Common myeloid progenitor, CD34-positive (primary cell): ENCODE measurements at regions of chr3 and their contacts with region 1.

Region 1: GRCh38 chr3:46866720-46867549 is 3.7 kb upstream of the MYL3 start:
- DNase-seq: peak in 2 of 3 donors; percentile 55 to 67
- H3K4me3 ChIP-seq: no peak overlapping the region
- H3K27ac ChIP-seq: no peak overlapping the region
- H3K4me1 ChIP-seq: peaks cover 0 to under 1% (median 0%) of the 10 kb centered on the region in 4 experiments
- H3K27me3 ChIP-seq: no peaks in the 10 kb centered on the region

Region 2: DNA sequence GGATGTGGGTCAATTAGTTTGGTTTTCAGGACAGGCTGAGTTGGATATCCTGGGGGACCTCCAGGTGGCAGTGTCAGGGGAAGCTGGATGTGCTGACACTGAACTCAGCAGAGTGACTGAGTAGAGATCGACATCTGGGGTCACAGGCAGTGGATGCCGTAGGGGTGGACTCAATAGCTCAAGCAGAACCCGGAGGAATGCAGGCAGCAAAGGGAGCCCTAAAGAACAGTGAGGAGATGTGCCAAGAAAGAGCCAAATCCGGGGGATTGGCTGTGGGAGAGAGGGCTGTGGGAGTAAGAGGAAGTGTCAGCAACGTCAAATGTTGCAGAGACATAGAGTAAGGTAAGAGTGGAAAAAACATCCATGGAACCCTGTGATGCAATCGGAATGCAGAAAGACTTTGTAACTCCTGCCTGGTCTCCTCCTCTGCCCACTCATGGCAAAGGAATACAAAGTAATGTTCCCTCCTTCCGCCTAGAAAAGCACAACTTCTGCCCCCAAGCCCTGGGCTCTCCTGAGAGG is 471.7 kb before region 1 on chr3:
- CTCF ChIA-PET with region 1: no interaction called
- POLR2A ChIA-PET with region 1: no interaction called
- DNase-seq: no peak
- H3K4me3 ChIP-seq: no peak overlapping the region
- H3K27ac ChIP-seq: no peak overlapping the region
- H3K4me1 ChIP-seq: peaks cover 4 to 37% (median 11%) of the 10 kb centered on the region in 4 experiments
- H3K27me3 ChIP-seq: no peaks in the 10 kb centered on the region

Region 3: DNA sequence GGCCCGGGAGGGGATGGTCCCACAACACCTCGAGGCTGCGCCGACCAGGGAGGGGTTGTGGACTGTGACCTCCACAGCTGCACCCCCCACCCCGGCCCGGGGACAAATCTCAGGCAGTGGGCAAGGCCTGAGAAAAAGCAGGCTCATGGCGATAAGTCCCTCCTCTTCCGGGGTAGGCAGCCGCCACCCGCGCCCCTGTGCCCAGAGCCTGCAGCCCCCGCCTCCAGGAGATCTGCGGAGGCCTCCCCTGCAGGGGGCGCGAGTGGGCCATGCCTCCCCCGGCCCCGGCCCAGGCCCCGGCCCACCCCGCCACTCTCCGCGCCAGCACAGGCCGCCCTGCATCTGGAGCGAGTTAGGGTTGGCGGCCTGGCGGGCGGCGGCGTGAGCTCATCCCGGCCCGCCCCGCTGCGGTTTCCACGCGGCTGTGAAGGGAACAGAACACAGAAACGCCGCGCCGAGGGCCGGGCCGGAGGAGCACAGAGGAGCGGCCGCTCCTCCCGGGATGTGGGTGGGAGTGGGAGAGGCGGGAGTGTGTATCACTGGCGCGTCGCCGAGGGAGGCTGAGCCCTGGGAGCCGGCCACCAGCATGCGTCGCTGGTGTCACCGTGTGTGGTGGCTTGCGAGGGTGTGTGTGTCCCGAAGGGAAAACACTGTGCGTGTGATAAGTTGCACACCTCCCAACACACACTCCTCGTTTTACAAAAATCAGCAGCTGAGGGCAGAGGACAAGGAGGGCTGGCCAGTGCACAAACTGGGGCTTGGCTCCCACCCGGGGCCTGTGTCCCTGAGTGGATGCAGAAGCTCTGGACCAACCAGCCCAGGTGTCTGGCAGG is 20.9 kb before region 1 on chr3:
- CTCF ChIA-PET with region 1: interaction called, 18 read pairs
- POLR2A ChIA-PET with region 1: no interaction called
- DNase-seq: peak; percentile 87 to 94 (median 92)
- H3K4me3 ChIP-seq: peak overlapping the region; percentile 33 to 86 (median 69)
- H3K27ac ChIP-seq: no peak overlapping the region
- H3K4me1 ChIP-seq: peaks cover 0 to 18% (median 16%) of the 10 kb centered on the region in 4 experiments
- H3K27me3 ChIP-seq: peaks cover 0 to 2% (median 0%) of the 10 kb centered on the region in 5 experiments

Region 4: DNA sequence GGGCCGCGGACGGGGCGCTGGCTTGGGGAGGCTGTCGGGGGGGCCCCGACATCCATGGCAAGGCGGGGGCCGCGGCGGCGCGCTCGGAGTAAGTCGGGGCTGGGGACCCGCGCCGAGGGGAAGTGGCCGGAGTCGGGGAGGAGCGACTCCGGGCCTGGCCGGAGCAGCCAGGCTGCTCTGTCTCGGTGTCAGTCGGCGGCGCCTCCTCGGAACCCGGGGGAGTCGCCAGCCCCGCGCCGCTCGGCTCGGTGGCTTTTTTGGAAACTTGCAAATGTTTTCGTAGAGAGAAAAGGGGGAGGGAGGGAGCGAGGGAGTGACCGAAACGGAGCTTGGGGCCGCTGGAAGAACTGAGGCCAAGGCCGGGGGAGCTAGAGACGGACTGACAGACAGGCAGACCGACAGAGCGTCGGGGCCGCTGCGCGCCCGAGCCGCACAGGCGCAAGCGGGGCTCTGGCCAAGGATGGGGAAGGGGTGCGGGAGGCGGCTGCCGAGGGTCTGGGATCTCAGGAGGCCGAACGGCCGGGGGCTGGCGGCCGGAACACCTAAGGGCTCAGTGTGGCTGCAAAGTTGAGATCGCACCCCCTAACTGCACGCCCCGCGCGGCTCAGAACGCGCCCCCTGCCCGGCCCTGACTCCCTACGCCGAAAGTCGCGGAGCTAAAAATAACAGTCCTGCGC is 15.6 kb after region 1 on chr3:
- CTCF ChIA-PET with region 1: interaction called, 10 read pairs
- POLR2A ChIA-PET with region 1: interaction called, 4 read pairs
- DNase-seq: peak in 2 of 3 donors; percentile 25 to 36
- H3K4me3 ChIP-seq: peak overlapping the region; percentile 23 to 66 (median 47)
- H3K27ac ChIP-seq: no peak overlapping the region
- H3K4me1 ChIP-seq: peaks cover 0 to 20% (median 15%) of the 10 kb centered on the region in 4 experiments
- H3K27me3 ChIP-seq: peaks cover 0 to 48% (median 16%) of the 10 kb centered on the region in 5 experiments

Region 5: DNA sequence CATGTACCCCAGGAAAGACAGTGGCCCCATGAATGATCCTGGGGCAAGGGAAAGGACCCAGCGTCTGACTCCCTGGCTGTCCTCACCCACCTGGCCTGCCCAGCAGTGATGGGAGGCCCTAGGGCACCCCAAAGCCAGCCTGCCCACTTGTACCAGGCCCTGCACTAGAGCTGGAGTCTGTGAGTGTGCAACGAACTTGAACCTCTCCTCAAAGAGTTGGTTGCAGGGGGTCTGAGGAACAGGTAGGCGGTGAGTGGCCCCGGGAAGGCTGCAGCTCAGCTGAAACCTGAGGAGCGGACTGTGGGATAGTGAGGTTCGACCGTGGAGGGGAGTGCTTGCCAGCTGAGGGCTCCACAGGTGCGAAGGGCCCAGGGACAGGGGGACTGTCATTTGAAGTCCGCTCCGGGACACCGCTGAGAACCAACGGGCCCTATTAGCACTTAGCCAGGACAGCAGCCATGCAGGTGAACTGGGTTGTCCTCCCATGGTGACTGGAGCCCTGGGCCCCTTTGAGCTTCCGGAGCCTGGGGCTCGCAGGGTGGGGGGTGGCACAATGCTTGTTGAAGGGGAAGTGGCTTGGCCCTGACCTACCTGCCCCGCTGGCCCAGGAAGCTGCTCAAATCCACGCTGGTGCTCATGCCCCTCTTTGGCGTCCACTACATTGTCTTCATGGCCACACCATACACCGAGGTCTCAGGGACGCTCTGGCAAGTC is 35.1 kb after region 1 on chr3:
- CTCF ChIA-PET with region 1: interaction called, 68 read pairs
- POLR2A ChIA-PET with region 1: no interaction called
- DNase-seq: no peak
- H3K4me3 ChIP-seq: no peak overlapping the region
- H3K27ac ChIP-seq: no peak overlapping the region
- H3K4me1 ChIP-seq: peaks cover 0 to 15% (median 7%) of the 10 kb centered on the region in 4 experiments
- H3K27me3 ChIP-seq: peaks cover 0 to 19% (median 6%) of the 10 kb centered on the region in 5 experiments

Region 6: DNA sequence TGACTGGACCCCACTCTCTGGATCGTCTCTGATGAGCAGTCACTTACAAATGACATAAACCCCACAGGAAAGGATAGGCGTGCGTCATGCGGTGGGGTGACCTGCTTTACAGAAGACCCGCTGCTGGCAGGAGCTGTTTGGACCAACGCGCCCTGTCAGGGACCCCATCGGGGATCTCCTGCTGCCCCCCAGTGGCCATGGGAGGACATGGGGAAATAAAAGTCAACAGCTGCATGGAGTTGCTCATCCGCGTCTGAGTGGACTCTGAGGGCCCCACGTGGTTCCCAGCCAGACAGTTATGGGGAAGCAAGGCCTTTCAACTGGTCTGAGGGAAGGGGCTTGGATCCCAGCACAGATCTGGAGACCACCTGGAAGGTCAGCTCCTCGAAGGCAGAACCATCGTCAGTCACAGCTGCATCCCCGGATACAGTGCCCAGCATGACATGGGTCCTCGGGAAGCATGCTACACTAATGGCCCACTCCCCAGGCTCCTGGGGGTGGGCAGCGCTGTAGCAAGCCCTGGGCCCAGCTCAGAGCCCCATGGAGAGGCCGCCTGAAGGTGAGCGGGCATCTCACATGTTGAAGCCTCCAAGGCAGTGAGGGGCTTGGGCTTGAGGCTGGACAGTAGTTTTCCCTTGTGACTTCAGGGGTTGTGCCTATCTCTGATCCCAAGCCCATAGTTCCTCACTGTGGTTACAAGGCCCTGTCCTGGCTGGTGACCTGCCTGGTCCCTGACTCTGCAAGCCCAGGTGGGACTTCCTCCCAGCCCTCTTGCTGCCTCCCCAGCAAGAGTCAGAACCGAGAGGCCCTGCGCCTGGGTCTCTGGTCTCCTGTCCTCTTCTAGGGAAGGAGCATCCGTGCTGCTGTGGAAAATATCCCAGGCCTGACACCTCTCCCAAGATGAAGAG is 42.9 kb after region 1 on chr3:
- CTCF ChIA-PET with region 1: interaction called, 14 read pairs
- POLR2A ChIA-PET with region 1: no interaction called
- DNase-seq: peak; percentile 80 to 90 (median 88)
- H3K4me3 ChIP-seq: peak overlapping the region in 1 of 7 experiments; percentile 14
- H3K27ac ChIP-seq: no peak overlapping the region
- H3K4me1 ChIP-seq: peaks cover 0 to 10% (median 3%) of the 10 kb centered on the region in 4 experiments
- H3K27me3 ChIP-seq: no peaks in the 10 kb centered on the region